ENCODE measurements at regions of chr16 and their contacts with region 1.

Region 1: GRCh38 chr16:84511180-84511824 is 6.8 kb upstream of the MEAK7 start:
- DNase-seq: peak; percentile 73 to 91 (median 88)
- H3K4me3 ChIP-seq: no peak overlapping the region
- H3K27ac ChIP-seq: no peak overlapping the region
- H3K4me1 ChIP-seq: peaks cover 4% of the 10 kb centered on the region
- H3K27me3 ChIP-seq: no peaks in the 10 kb centered on the region
- CTCF ChIP-seq: peak; percentile 87 to 91 (median 91)
- EP300 ChIP-seq: no peak
- POLR2A ChIP-seq: no peak

Region 2: DNA sequence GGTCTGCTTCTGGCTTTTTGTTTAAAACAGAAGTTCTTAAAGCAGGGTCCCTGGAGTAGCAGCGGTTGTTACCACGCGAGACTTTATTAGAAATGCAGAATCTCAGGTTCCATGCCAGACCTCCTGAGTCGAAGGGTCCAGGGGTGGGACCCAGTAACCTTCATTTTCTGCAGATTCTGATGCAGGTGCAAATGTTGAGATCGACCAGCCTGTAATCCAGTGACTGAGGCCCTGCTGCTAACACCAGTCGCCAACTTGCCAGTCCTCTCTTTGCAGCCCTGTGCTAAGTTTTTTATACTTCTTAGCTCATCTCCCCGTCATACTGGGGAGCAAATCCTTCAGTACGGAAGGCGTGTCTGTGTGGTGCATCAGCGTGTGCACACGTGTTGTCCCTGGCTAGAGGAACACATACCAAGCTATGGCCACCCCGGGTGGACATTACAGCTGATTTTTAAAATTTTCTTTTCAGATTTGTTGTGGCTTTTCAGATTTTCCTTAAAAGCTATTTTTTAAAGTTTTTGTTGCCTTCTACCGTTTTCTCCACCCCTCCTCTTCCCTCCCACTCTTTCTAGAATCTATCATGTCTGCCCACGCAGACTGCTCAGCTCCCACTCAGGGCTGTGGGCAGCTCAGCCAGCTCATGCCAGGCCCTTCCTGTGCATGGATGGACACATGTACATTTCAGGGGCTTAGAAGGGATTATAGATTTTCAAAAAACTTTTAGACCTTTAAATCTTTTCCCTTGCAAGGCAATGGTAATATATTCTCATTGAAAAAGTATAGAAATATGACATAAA is 64.5 kb before region 1 on chr16:
- intact Hi-C with region 1: no loop called
- DNase-seq: no peak
- H3K4me3 ChIP-seq: no peak overlapping the region
- H3K27ac ChIP-seq: no peak overlapping the region
- H3K4me1 ChIP-seq: no peaks in the 10 kb centered on the region
- H3K27me3 ChIP-seq: no peaks in the 10 kb centered on the region
- CTCF ChIP-seq: no peak
- EP300 ChIP-seq: no peak
- POLR2A ChIP-seq: no peak

Region 3: GRCh38 chr16:84617791-84618580 is 106.7 kb after region 1 on chr16 and contains the start of gene COTL1:
- intact Hi-C with region 1: loop called (anchors 2 to 5 kb)
- DNase-seq: peak; percentile 98 to 99 (median 99)
- H3K4me3 ChIP-seq: peak within 1 kb of the TSS; percentile 52
- H3K27ac ChIP-seq: peak within 1 kb of the TSS; percentile 57 to 66
- H3K4me1 ChIP-seq: peaks cover 22% of the 10 kb centered on the region
- H3K27me3 ChIP-seq: no peaks in the 10 kb centered on the region
- CTCF ChIP-seq: peak in 1 of 3 donors; percentile 8
- EP300 ChIP-seq: peak; percentile 40
- POLR2A ChIP-seq: peak; percentile 68
- total RNA-seq, gene COTL1: 13.8 to 46.4 (median 26.1) TPM

Region 4: DNA sequence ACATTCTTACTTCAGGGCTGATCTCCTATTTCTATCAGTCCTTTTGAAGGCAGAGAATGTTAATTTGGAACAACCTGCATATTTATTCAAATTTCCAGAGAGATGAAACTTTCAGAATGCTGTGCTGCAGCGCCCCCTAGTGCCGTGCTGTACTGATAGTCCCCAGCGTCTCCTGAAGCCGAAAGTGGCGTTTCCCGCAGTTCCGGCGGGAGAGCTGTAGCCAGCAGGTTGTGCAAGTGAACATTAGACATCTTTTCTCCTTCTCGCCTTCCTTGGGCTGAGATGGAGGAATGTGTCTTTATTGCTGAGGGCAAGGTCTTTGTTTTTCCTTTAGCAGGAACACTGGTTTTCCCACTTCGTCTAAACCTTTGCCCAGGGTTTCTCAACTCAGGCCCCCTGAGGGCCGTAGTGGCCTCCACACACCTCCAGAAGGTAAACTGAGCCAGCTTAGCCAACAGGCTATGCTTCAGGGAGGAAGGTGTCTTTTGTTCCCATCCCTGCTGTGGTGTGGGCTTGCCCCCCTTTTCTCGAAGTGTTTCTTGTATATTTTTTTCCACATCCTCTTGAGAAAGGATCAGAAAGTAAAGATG is 214.9 kb after region 1 on chr16:
- intact Hi-C with region 1: loop called (anchors 2 to 5 kb)
- DNase-seq: peak; percentile 89 to 96 (median 95)
- H3K4me3 ChIP-seq: no peak overlapping the region
- H3K27ac ChIP-seq: no peak overlapping the region
- H3K4me1 ChIP-seq: peaks cover 7% of the 10 kb centered on the region
- H3K27me3 ChIP-seq: no peaks in the 10 kb centered on the region
- CTCF ChIP-seq: peak; percentile 87 to 92 (median 88)
- EP300 ChIP-seq: no peak
- POLR2A ChIP-seq: no peak

Region 5: GRCh38 chr16:84741340-84741830 is 230.1 kb after region 1 on chr16:
- intact Hi-C with region 1: loop called in 1 of 4 experiments (anchors 5 kb)
- DNase-seq: no peak
- H3K4me3 ChIP-seq: no peak overlapping the region
- H3K27ac ChIP-seq: no peak overlapping the region
- H3K4me1 ChIP-seq: peaks cover 8% of the 10 kb centered on the region
- H3K27me3 ChIP-seq: no peaks in the 10 kb centered on the region
- CTCF ChIP-seq: no peak
- EP300 ChIP-seq: no peak
- POLR2A ChIP-seq: no peak

Region 6: DNA sequence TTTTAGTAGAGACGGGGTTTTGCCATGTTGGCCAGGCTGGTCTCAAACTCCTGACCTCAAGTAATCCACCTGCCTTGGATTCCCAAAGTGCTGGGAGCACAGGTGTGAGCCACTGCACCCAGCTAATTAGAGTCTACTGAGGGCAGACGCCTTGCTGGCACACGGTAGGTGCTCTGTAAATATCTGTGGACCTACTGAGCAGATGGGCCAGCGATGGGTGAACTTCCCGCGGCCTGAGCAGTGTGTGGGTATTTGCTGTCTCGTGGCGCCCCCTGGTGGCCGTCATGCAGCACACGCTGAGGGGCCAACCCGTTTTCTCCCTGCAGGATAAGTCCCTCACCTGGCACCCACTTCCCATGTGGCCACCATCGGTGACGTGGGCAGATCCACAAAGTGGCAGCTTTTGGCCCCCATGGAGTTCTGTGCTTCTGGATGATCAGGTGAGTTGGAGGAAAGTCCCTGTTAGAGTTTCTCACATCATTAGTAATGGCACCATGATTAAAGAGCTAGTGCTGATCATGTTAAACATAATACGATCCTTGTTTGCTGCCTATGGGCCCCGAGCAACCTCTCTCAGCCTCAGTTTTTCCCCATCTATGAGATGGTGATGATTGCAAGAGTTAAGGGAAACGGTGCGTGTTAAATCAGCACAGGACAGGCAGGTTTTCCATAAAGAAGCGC is 459.3 kb after region 1 on chr16:
- intact Hi-C with region 1: loop called in 2 of 4 experiments (anchors 10 kb)
- DNase-seq: peak; percentile 75 to 88 (median 85)
- H3K4me3 ChIP-seq: no peak overlapping the region
- H3K27ac ChIP-seq: no peak overlapping the region
- H3K4me1 ChIP-seq: no peaks in the 10 kb centered on the region
- H3K27me3 ChIP-seq: no peaks in the 10 kb centered on the region
- CTCF ChIP-seq: peak; percentile 73 to 96 (median 96)
- EP300 ChIP-seq: no peak
- POLR2A ChIP-seq: no peak

Measured in ovary (tissue), 10 donors.